Dorsolateral prefrontal cortex (tissue), 120 donors: ENCODE measurements at regions of chr14 and their contacts with region 1.

Region 1: DNA sequence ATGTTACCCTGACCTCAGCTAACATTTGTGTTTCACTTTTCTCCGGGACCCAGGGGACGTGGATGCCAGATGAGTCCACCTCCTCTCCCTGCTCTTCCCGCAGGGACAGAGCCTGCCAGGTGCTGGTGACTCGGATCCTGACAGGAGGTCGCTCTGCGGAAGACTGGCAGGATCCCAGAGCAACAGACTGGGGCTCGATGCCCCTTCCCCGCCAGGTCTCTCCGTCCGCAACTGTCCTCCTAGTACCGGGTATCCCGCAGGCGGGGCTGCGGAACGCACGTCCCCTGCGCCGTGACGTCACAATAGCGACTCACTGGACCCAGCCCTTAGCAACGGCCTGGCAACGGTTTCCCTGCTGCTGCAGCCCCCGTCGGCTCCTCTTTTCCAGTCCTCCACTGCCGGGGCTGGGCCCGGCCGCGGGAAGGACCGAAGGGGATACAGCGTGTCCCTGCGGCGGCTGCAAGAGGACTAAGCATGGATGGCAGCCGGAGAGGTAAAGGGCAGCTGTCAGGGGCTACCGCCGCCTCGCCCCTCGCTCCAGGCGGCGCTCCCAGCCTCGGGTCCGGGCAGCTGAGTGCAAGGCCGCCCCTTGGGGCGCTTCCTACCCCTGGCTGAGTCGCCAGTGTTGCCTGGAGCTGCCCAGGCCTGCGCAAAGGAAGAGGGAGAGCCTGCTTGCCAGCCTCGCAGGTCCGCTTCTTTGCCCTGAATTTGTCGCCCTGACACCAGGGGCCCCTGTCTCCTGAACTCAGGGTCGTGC is at the start of gene SPATA7:
- DNase-seq: peak; percentile 93 to 98 (median 97)
- H3K4me3 ChIP-seq: peak within 1 kb of the TSS; percentile 63 to 100 (median 92)
- H3K27ac ChIP-seq: peak within 1 kb of the TSS; percentile 46 to 97 (median 89)
- H3K27me3 ChIP-seq: no peaks in the 10 kb centered on the region
- CTCF ChIP-seq: peak in 33 of 56 donors; percentile 3 to 54 (median 28)
- total RNA-seq, gene SPATA7: 23.6 to 62.5 (median 38.1) TPM

Region 2: GRCh38 chr14:87992718-87993628 is 392.6 kb before region 1 on chr14 and contains the start of gene GALC:
- intact Hi-C with region 1: loop called (anchors 5 to 10 kb)
- DNase-seq: peak; percentile 94 to 96 (median 95)
- H3K4me3 ChIP-seq: peak within 1 kb of the TSS; percentile 61 to 92 (median 79)
- H3K27ac ChIP-seq: peak within 1 kb of the TSS; percentile 72 to 99 (median 97)
- H3K27me3 ChIP-seq: no peaks in the 10 kb centered on the region
- CTCF ChIP-seq: peak in 25 of 56 donors; percentile 7 to 44 (median 23)
- total RNA-seq, gene GALC: 23.9 to 65.1 (median 41.0) TPM

Region 3: DNA sequence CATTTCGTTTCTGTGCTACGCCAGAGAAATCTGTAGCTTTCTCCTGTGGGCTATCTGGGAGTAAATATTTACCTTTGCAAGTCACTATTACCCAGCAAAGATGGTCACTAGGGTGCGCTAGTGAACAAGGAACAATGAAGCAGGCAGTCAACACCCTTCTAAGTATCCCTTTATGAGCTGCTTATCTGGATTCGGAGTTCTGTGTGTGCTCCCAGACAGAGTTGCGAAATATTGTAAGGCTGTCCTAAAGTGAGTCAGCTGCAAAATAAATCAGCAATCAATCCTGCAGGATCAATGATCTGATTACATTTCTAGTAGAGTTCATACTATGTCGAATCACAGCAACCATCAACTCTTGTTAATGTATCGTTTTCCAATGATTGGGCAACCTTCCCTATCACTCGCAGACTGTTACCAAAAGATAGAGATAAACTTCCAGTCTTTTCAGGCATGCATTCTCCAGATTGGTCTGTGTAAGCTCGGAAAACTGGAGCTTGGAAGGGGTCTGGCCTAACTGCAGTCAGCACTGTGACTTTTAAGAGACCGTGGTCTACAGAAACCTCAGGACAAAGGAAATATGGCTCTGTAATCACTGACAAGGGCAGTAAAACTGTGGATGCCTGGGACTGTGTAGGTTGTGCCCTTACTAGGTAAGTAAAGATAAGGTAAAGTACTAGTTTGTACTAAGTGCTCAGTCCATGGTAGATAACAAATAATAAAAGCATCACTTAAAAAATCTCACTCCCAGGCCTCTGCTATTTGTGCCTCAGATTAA is 195.9 kb before region 1 on chr14:
- intact Hi-C with region 1: loop called (anchors 1 to 5 kb)
- DNase-seq: peak in 6 of 10 donors; percentile 46 to 88 (median 69)
- H3K4me3 ChIP-seq: peak overlapping the region in 23 of 59 donors; percentile 1 to 42 (median 21)
- H3K27ac ChIP-seq: peak overlapping the region in 7 of 59 donors; percentile 15 to 56 (median 33)
- H3K27me3 ChIP-seq: peaks cover 0 to 4% (median 0%) of the 10 kb centered on the region in 45 donors
- CTCF ChIP-seq: peak; percentile 35 to 87 (median 74)

Region 4: GRCh38 chr14:88323523-88324199 is 61.9 kb before region 1 on chr14:
- intact Hi-C with region 1: loop called in 1 of 2 experiments (anchors 10 kb)
- DNase-seq: peak in 8 of 10 donors; percentile 30 to 77 (median 50)
- H3K4me3 ChIP-seq: peak overlapping the region; percentile 47 to 78 (median 63)
- H3K27ac ChIP-seq: peak overlapping the region in 53 of 59 donors; percentile 1 to 88 (median 77)
- H3K27me3 ChIP-seq: peaks cover 0 to 36% (median 7%) of the 10 kb centered on the region in 45 donors
- CTCF ChIP-seq: no peak

Region 5: GRCh38 chr14:88562831-88563686 is 177.5 kb after region 1 on chr14 and contains the start of gene ZC3H14:
- intact Hi-C with region 1: loop called in 1 of 2 experiments (anchors 5 kb)
- DNase-seq: peak; percentile 64 to 93 (median 76)
- H3K4me3 ChIP-seq: peak within 1 kb of the TSS; percentile 71 to 99 (median 95)
- H3K27ac ChIP-seq: peak within 1 kb of the TSS; percentile 46 to 96 (median 89)
- H3K27me3 ChIP-seq: no peaks in the 10 kb centered on the region
- CTCF ChIP-seq: peak in 35 of 56 donors; percentile 4 to 55 (median 29)
- total RNA-seq, gene ZC3H14: 68.9 to 120 (median 86.6) TPM